ENCODE measurements at regions of chr15 and their contacts with region 1.

Region 1: GRCh38 chr15:49366496-49366895 is 56.5 kb upstream of the FGF7 start:
- DNase-seq: no peak
- ATAC-seq: no peak
- H3K4me3 Mint-ChIP-seq: no peak overlapping the region
- H3K27ac Mint-ChIP-seq: no peak overlapping the region
- H3K4me1 Mint-ChIP-seq: no peaks in the 10 kb centered on the region
- H3K27me3 Mint-ChIP-seq: no peaks in the 10 kb centered on the region

Region 2: DNA sequence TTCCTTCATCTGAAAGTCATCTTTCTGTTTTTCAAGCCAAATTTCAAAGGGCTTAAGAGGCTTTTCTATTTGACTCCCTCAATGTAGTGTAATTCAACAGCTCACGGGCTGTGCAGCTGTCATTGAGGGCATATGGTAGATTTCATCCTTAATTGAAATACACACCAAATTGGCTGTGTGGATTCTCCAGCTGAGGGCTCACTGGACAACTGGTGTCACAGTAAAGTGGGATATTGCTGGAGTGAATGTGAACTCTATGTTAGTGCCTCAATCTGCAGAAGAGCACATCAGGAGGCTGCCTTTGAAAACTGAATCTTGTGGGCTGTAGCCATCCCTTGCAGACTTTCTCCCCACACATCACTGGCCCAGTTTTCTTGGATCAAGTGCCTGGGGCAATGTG is 76.3 kb before region 1 on chr15:
- CTCF ChIA-PET with region 1: no interaction called
- POLR2A ChIA-PET with region 1: no interaction called
- intact Hi-C with region 1: loop called in 1 of 2 experiments (anchors 10 kb)
- DNase-seq: no peak
- ATAC-seq: no peak
- H3K4me3 Mint-ChIP-seq: no peak overlapping the region
- H3K27ac Mint-ChIP-seq: no peak overlapping the region
- H3K4me1 Mint-ChIP-seq: peaks cover 20% of the 10 kb centered on the region
- H3K27me3 Mint-ChIP-seq: no peaks in the 10 kb centered on the region